ENCODE measurements at regions of chr14 and their contacts with region 1.

Region 1: DNA sequence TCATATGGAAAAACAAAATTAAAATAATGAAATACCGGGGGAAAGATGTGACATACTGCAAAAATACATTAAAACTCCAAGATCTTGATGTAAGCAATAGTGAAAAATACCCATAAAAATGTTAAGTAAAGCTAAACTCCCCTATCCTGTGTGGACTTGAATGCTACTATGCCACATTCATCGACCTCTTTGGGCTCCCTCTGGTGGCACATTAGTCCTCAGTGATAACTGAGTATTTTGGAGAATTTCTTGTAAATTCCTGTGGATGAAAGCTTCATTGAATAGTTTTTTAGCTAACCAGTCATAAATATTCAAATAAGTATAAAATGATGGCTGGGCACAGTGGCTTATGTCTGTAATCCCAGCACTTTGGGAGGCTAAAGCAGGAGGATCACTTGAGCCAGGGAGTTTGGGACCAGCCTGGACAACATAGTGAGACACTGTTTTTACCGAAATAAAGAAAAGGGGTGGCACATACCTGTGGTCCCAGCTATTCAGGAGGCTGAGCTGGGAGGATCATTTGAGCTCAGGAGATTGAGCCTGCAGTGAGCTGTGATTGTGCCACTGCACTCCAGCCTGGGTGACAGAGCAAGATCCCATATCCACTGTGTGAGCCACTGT is 42.4 kb upstream of the SGPP1 start:
- DNase-seq: peak; percentile 72
- H3K4me3 Mint-ChIP-seq: no peak overlapping the region
- H3K27ac Mint-ChIP-seq: no peak overlapping the region
- H3K4me1 Mint-ChIP-seq: no peaks in the 10 kb centered on the region
- H3K27me3 Mint-ChIP-seq: no peaks in the 10 kb centered on the region

Region 2: DNA sequence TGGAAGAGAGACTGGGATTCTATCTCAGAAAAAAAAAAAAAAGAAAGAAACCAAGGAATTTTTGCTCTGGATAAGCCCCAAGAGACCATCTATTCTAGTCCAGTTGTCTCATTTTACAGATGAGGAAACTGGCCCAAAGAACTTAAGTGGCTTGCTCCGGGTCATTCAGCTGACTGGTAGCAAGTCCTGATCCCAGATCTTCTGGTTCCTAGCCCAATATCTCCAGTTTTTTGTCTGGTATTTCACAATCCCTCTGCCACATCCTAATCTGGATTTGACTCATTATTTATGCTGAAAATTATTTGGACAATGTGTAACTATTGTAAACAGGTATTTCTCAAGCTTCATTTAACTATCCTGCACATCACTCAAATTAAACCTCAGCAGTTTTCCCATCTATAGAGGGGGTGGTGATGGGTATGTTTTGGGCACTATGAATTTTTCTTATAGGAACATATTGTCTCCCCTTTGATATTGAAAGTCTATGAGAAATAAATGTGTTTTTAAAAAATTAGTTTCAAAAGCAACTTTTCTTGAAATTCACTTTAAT is 270.5 kb before region 1 on chr14:
- CTCF ChIA-PET with region 1: no interaction called
- intact Hi-C with region 1: no loop called
- DNase-seq: no peak
- H3K4me3 Mint-ChIP-seq: no peak overlapping the region
- H3K27ac Mint-ChIP-seq: no peak overlapping the region
- H3K4me1 Mint-ChIP-seq: peaks cover 22% of the 10 kb centered on the region
- H3K27me3 Mint-ChIP-seq: no peaks in the 10 kb centered on the region

Region 3: GRCh38 chr14:63632932-63633514 is 137.3 kb before region 1 on chr14:
- CTCF ChIA-PET with region 1: interaction called, 8 read pairs
- intact Hi-C with region 1: loop called (anchors 1 kb)
- DNase-seq: no peak
- H3K4me3 Mint-ChIP-seq: no peak overlapping the region
- H3K27ac Mint-ChIP-seq: no peak overlapping the region
- H3K4me1 Mint-ChIP-seq: peaks cover 51% of the 10 kb centered on the region
- H3K27me3 Mint-ChIP-seq: no peaks in the 10 kb centered on the region

Measured in activated naive CD4-positive, alpha-beta T cell treated with anti-CD3 and anti-CD28 coated beads for 36 hours (primary cell).